Dorsolateral prefrontal cortex (tissue), 120 donors: ENCODE measurements at regions of chr11 and their contacts with region 1.

Region 1: DNA sequence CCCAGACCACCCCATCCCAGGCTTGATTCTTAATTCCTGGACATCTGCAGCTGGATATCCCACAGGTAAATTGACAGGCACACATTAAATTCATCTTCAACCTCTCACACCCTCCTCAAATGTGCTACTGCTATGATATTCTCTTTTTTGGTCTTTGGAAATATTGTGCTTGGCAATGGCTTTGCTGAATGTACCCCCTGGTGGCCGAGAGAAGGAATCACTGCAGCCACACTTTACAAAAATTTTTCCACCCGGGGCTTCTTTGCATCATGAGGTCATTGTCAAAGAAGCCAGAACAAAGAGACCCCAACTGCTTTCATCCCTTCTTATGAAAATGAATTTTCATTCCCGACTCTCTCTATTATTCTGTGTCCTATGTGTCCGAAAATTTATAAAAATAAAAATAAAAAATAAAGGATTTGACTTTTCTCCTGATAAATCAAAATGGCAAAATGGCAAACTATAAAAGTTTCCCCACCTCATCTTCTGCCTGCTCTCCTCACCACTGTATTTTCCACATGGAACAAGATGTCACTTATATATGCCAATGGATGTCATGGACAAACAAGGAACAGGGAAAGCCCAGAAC is 15.0 kb upstream of the CYB5R2 start:
- DNase-seq: no peak
- H3K4me3 ChIP-seq: no peak overlapping the region
- H3K27ac ChIP-seq: peak overlapping the region in 7 of 59 donors; percentile 24 to 49 (median 33)
- H3K27me3 ChIP-seq: peaks cover 0 to 3% (median 0%) of the 10 kb centered on the region in 45 donors
- CTCF ChIP-seq: peak; percentile 64 to 96 (median 88)

Region 2: DNA sequence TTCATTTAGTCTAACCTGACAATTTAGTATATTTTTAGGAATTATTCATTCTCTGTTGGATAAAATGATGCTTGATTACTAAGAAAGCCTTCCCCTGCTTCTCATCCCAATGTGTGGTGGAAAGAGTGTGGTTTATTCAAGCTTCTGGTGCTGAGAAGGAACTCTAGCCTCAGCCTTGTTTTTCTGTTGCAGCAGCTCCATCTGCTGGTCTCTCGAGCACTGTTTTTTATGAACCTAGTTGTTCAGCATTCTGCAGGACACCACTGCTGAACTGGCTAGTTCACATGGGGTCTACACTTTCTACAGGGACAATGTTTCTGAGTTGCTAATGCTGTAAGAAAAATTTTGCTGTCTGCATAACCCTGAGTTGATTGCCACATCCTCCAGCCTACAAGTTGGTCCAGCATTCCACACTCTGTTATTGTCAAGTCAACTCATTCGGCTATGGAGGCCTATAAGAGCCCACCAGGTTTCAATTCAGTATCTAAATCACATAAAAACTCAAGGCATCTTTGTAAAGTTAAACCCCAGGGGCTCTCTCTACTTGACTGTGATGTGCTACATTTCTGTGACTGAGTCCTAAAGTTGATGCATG is 930.9 kb before region 1 on chr11:
- intact Hi-C with region 1: loop called in 1 of 2 experiments (anchors 10 kb)
- DNase-seq: peak in 8 of 10 donors; percentile 21 to 80 (median 56)
- H3K4me3 ChIP-seq: no peak overlapping the region
- H3K27ac ChIP-seq: no peak overlapping the region
- H3K27me3 ChIP-seq: no peaks in the 10 kb centered on the region
- CTCF ChIP-seq: peak; percentile 26 to 90 (median 70)

Region 3: GRCh38 chr11:7143908-7144307 is 544.4 kb before region 1 on chr11:
- intact Hi-C with region 1: loop called in 1 of 2 experiments (anchors 10 kb)
- DNase-seq: no peak
- H3K4me3 ChIP-seq: no peak overlapping the region
- H3K27ac ChIP-seq: no peak overlapping the region
- H3K27me3 ChIP-seq: no peaks in the 10 kb centered on the region
- CTCF ChIP-seq: peak; percentile 48 to 92 (median 69)

Region 4: GRCh38 chr11:7442588-7443215 is 245.6 kb before region 1 on chr11:
- intact Hi-C with region 1: loop called in 1 of 2 experiments (anchors 10 kb)
- DNase-seq: peak; percentile 68 to 93 (median 80)
- H3K4me3 ChIP-seq: no peak overlapping the region
- H3K27ac ChIP-seq: no peak overlapping the region
- H3K27me3 ChIP-seq: no peaks in the 10 kb centered on the region
- CTCF ChIP-seq: peak in 55 of 56 donors; percentile 55 to 93 (median 86)

Region 5: GRCh38 chr11:7639643-7640025 is 48.7 kb before region 1 on chr11:
- intact Hi-C with region 1: no loop called
- DNase-seq: peak in 1 of 10 donors; percentile 61
- H3K4me3 ChIP-seq: no peak overlapping the region
- H3K27ac ChIP-seq: peak overlapping the region in 8 of 59 donors; percentile 2 to 55 (median 22)
- H3K27me3 ChIP-seq: no peaks in the 10 kb centered on the region
- CTCF ChIP-seq: no peak

Region 6: GRCh38 chr11:7986768-7987559 is 298.6 kb after region 1 on chr11 and contains the start of gene EIF3F:
- intact Hi-C with region 1: loop called in 1 of 2 experiments (anchors 10 kb)
- DNase-seq: peak; percentile 75 to 96 (median 91)
- H3K4me3 ChIP-seq: peak within 1 kb of the TSS; percentile 57 to 97 (median 83)
- H3K27ac ChIP-seq: peak within 1 kb of the TSS in 55 of 59 donors; percentile 9 to 89 (median 74)
- H3K27me3 ChIP-seq: no peaks in the 10 kb centered on the region
- CTCF ChIP-seq: peak; percentile 75 to 96 (median 90)
- total RNA-seq, gene EIF3F: 85.3 to 147 (median 108) TPM